G401 (cell line): ENCODE measurements at regions of chr9 and their contacts with region 1.

Region 1: DNA sequence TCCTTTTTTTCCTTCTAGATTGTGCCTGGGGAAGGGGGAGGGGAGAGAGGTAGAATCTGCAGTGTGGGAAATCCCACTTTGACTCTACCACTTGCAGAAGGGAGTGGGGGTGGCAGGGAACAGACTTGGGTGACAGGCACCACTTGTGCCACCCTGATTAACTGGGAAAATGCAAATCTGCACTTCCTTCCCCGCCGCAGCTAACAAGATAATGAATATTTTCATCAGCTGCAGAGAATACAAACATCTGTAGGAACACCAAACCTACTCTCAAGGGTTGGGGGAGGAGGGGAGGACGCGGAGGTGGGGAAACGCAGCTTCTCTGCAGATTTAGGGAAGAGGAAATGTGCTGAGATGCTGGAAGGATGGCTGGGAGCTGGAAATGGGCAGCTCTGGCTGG is 73.5 kb downstream of the TRIM32 start:
- DNase-seq: no peak

Region 2: DNA sequence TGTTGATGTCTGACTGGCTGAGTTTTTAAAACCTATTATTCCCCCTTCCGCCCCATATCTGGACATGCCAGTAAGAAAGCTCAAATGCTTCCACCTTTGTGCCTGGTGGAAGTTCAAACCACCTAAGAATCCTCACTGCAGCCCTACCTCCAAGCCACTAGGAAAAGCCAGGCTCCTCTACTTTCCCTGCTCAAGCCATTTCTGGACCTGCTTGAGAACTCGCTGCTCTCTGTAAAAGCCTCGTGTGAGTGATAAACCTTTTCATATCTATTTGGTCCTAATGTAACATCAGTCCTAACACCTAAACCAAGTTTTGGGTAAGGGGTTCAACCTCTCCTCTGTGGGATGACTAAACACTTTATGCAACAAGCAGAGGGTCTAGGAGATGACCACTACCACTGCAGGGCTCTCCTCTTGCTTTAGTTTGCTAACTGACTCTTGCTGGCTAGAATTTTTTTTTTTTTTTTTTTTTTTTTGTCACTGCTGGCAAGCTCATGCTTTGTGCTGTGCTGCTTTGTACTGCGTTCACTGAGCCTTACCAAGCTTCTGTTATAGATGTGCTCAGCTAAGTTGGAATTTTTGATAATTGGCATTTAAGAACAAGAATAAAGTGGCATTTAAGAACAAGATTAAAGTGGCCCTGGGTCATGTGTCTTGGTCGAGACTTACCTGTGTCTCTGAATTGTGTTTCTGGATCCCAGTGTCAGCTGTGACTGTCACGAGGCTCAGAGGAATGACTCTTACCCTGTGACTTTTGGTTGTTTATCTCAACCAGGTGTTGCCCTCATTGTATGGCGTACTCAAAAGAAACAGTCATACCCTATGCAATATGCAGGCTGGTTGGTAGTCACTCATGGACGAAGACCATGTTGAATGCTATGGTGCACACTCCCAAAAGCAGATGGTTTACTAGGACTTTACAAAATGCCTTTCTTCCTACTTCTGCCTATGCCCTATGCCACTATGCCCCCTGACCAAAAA is 54.0 kb before region 1 on chr9:
- in situ Hi-C with region 1: no loop called
- DNase-seq: peak; percentile 76

Region 3: GRCh38 chr9:116726602-116727001 is 34.0 kb before region 1 on chr9:
- in situ Hi-C with region 1: loop called (anchors 5 kb)
- DNase-seq: no peak

Region 4: GRCh38 chr9:116860509-116861120 is 100.0 kb after region 1 on chr9:
- in situ Hi-C with region 1: no loop called
- DNase-seq: peak; percentile 68